SK-N-SH (cell line): ENCODE measurements at regions of chr16 and their contacts with region 1.

Region 1: GRCh38 chr16:6066652-6067051 is 969.1 kb upstream of the EEF2KMT start:
- DNase-seq: no peak
- H3K4me3 ChIP-seq: no peak overlapping the region
- H3K27ac ChIP-seq: no peak overlapping the region
- H3K4me1 ChIP-seq: no peaks in the 10 kb centered on the region; a peak in 1 of 4 replicates
- H3K27me3 ChIP-seq: no peaks in the 10 kb centered on the region
- CTCF ChIP-seq: no peak
- EP300 ChIP-seq: no peak
- RAD21 ChIP-seq: no peak

Region 2: DNA sequence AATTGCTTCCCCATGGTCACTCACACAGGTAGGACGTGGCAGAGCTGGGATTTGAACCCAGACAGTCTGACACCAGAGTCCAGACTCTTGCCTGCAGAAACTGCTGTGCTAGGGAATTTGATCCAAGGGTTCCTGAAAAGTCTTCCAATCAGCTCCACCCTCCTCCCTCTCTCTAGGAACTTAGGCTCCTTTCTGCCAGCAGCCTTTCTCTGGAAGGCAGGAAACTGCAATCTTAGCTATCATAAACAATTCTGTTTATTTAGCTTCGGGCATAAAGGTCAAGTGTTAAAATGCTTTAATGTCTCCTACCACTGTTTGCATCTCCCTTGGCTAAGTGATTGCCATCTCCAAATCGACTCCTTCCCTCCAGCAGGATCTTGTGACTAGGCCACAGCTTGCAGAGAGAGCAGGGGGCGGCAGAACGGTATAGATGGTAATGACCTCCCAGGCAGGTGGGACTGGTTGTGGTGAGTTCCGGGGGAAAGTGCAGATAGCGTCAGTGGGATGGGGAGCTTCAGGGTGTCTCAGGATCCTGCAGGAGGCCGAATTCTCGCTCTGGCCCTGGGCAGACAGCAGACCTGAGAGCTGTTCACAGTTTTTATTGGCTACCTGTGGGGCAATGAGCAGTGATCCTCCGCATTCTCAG is 86.6 kb before region 1 on chr16:
- CTCF ChIA-PET with region 1: no interaction called
- POLR2A ChIA-PET with region 1: no interaction called
- DNase-seq: no peak
- H3K4me3 ChIP-seq: no peak overlapping the region
- H3K27ac ChIP-seq: no peak overlapping the region
- H3K4me1 ChIP-seq: peaks cover 0 to 1% of the 10 kb centered on the region in 2 experiments; a peak in 1 of 4 replicates
- H3K27me3 ChIP-seq: no peaks in the 10 kb centered on the region
- CTCF ChIP-seq: no peak
- EP300 ChIP-seq: no peak
- RAD21 ChIP-seq: no peak

Region 3: DNA sequence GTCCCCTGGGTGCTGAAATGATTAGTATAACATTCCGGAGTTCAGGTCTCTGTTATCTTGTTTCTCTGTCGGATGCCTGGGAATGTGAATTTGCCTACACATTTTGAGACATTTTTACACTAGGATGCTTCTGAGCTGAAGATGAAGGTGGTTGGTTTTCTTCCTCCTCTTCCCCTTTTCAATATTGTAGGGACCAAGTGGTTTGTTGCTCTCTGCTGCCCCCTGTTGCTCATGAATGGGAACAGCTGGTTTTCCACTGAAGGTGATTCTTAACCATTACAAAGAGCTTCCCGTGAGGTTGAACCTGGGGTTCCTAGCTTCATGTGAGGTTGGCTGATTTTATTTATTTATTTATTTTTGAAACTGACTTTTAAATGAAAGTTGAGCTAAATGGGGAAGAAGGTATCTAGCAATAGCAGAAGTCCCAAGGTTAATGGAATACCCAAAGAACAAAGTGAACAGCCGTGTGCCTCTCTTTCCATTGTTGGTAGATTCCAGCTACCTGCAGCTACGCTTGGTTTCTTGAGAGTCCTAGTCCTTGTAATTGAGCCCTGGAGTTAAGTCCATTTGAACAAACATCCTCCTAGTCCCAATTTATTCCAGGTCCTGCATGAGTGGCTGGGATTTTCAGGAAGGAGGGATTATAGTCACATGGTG is 14.8 kb after region 1 on chr16:
- CTCF ChIA-PET with region 1: interaction called, 27 read pairs
- POLR2A ChIA-PET with region 1: no interaction called
- DNase-seq: peak; percentile 57
- H3K4me3 ChIP-seq: no peak overlapping the region; a peak in 1 of 4 replicates
- H3K27ac ChIP-seq: no peak overlapping the region
- H3K4me1 ChIP-seq: peaks cover 0 to 2% of the 10 kb centered on the region in 2 experiments; a peak in 1 of 4 replicates
- H3K27me3 ChIP-seq: no peaks in the 10 kb centered on the region
- CTCF ChIP-seq: peak; percentile 40
- EP300 ChIP-seq: no peak
- RAD21 ChIP-seq: peak; percentile 79